Transverse colon (tissue), 4 donors: ENCODE measurements at regions of chr7 and their contacts with region 1.

Region 1: GRCh38 chr7:25862260-25863037 is 289.5 kb upstream of the NFE2L3 start:
- DNase-seq: peak; percentile 99
- H3K4me3 ChIP-seq: peak overlapping the region in 1 of 4 donors; percentile 34
- H3K27ac ChIP-seq: peak overlapping the region; percentile 53 to 62 (median 58)
- H3K4me1 ChIP-seq: peaks cover 3 to 27% (median 13%) of the 10 kb centered on the region in 4 donors
- H3K27me3 ChIP-seq: peaks cover 100% of the 10 kb centered on the region
- CTCF ChIP-seq: no peak
- EP300 ChIP-seq: no peak
- POLR2A ChIP-seq: no peak

Region 2: GRCh38 chr7:25720427-25720826 is 142.0 kb before region 1 on chr7:
- in situ Hi-C with region 1: no loop called
- intact Hi-C with region 1: no loop called
- DNase-seq: no peak
- H3K4me3 ChIP-seq: no peak overlapping the region
- H3K27ac ChIP-seq: no peak overlapping the region
- H3K4me1 ChIP-seq: peaks cover 0 to 2% (median 0%) of the 10 kb centered on the region in 4 donors
- H3K27me3 ChIP-seq: no peaks in the 10 kb centered on the region
- CTCF ChIP-seq: peak; percentile 3 to 40 (median 28)
- EP300 ChIP-seq: no peak
- POLR2A ChIP-seq: no peak

Region 3: DNA sequence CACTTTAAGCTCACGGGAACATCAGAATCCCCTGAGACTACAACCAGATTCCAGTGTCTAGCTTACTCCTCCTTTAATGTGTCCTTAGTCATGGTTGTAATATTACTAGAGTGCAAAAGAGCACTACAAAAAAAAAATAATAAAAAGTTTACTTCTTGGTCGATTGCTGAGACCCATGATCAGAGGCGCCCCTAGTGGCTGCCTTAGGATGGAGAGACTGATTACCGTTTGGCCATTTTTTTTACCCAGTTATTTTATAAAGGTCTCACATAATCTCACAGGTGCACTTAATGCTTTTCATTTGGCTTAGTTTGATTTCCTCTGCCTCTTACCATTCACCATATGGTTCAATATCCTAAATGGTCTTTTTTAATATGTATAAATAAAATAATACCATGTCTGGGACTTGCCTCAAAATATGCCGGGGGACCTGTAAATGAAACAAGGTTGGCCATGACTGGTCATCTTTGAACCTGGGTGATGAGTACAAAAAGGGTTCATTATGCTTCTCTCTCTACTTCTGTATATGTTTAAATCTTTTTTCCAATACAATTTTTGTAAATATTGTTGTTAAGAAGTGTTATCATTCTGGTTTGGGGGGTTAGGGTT is 41.9 kb before region 1 on chr7:
- in situ Hi-C with region 1: no loop called
- intact Hi-C with region 1: no loop called
- DNase-seq: no peak
- H3K4me3 ChIP-seq: no peak overlapping the region
- H3K27ac ChIP-seq: no peak overlapping the region
- H3K4me1 ChIP-seq: no peaks in the 10 kb centered on the region
- H3K27me3 ChIP-seq: no peaks in the 10 kb centered on the region
- CTCF ChIP-seq: peak in 3 of 5 experiments; percentile 15 to 39 (median 18)
- EP300 ChIP-seq: no peak
- POLR2A ChIP-seq: no peak

Region 4: DNA sequence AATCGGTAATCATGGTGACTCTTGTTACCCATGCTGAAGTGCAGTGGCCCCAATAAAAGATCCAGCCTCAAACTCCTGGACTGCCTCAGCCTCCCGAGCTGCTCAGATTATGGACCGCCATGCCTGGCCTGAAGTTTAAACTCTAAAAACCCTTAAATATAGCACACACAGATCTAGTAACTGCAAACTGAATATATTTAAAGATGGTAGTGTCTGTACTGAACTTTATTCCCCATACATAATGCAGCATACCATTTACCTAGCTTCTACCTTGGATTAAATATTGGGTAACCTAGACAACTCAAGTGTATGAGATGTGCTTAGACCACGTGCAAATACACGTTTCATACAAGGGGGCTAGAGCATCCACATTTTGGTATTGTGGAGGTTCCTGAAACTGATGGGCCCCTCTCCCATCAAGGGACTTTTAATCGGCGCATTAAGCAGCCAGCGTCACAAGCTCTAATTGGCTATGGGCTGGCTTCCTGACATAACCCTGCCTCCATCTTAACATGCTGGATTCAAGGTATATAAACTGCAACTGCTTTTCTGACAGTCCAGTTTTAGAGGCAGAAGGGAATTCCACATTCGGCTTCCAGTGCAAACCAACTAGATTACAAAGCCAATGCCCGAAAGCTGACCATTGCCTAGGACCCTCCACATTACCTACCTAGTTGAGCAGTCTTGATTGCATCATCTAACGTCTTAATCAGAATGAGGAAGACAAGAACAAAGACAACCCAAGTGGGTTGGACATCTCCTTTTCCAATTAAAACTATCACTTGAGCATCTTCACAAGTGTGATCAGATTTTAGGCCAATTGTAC is 325.1 kb after region 1 on chr7:
- in situ Hi-C with region 1: no loop called
- intact Hi-C with region 1: no loop called
- DNase-seq: no peak
- H3K4me3 ChIP-seq: no peak overlapping the region
- H3K27ac ChIP-seq: no peak overlapping the region
- H3K4me1 ChIP-seq: peaks cover 2 to 16% (median 6%) of the 10 kb centered on the region in 4 donors
- H3K27me3 ChIP-seq: no peaks in the 10 kb centered on the region
- CTCF ChIP-seq: no peak
- EP300 ChIP-seq: no peak
- POLR2A ChIP-seq: peak; percentile 23

Region 5: DNA sequence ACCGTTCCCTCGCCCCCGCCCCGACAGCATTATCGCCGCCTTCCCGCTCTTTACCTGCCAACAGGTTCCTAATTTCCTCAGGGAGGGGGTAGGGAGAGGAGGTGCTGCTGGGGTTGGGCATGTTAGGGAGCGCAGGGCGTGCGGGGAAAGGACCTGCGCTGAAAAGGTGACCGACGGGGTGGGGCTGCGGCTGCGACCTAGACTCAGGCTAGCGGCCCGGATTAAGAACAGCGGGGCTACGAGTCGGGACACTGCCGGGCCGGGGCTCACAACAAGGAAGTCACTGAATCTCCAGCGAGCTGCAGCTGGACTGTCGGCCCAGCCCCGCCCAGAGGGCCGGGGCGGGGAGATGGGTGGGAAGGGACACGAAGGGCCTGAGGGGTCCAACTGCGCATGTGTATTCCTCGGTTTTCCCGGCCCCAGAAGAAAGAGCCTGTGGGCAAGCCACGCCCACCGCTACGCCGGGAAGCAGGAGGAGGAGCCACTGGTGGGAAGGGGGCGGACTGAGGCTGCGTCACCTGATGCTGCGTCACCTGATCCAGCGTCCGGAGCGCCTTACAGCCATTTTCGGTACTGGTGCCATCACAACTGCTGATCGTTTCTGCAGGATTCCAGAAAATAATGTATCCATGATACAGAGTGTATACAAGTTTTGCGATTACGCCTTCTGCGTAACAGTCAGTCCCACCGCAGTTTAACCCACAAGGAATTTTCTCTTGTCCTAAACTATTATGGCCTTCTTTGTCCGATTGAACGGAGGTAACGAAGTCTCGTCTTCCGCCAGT is 1002.1 kb after region 1 on chr7 and contains the start of gene SKAP2:
- in situ Hi-C with region 1: loop called in 3 of 4 experiments (anchors 25 kb)
- intact Hi-C with region 1: no loop called
- DNase-seq: peak; percentile 99
- H3K4me3 ChIP-seq: peak within 1 kb of the TSS; percentile 66 to 71 (median 68)
- H3K27ac ChIP-seq: peak within 1 kb of the TSS; percentile 95 to 98 (median 96)
- H3K4me1 ChIP-seq: peaks cover 2 to 46% (median 20%) of the 10 kb centered on the region in 4 donors
- H3K27me3 ChIP-seq: no peaks in the 10 kb centered on the region
- CTCF ChIP-seq: no peak
- EP300 ChIP-seq: no peak
- POLR2A ChIP-seq: peak; percentile 99
- total RNA-seq, gene SKAP2: 2.6 to 35.2 (median 23.8) TPM

Region 6: GRCh38 chr7:27160546-27161213 is 1298.2 kb after region 1 on chr7:
- in situ Hi-C with region 1: loop called in 1 of 4 experiments (anchors 25 kb)
- intact Hi-C with region 1: loop called (anchors 10 kb)
- DNase-seq: peak; percentile 94
- H3K4me3 ChIP-seq: peak overlapping the region; percentile 30 to 62 (median 48)
- H3K27ac ChIP-seq: peak overlapping the region; percentile 95 to 99 (median 98)
- H3K4me1 ChIP-seq: peaks cover 4 to 41% (median 19%) of the 10 kb centered on the region in 4 donors
- H3K27me3 ChIP-seq: peaks cover 18% of the 10 kb centered on the region
- CTCF ChIP-seq: peak; percentile 100
- EP300 ChIP-seq: no peak
- POLR2A ChIP-seq: peak; percentile 27